Head of caudate nucleus (tissue), 42 donors: ENCODE measurements at regions of chr11 and their contacts with region 1.

Region 1: DNA sequence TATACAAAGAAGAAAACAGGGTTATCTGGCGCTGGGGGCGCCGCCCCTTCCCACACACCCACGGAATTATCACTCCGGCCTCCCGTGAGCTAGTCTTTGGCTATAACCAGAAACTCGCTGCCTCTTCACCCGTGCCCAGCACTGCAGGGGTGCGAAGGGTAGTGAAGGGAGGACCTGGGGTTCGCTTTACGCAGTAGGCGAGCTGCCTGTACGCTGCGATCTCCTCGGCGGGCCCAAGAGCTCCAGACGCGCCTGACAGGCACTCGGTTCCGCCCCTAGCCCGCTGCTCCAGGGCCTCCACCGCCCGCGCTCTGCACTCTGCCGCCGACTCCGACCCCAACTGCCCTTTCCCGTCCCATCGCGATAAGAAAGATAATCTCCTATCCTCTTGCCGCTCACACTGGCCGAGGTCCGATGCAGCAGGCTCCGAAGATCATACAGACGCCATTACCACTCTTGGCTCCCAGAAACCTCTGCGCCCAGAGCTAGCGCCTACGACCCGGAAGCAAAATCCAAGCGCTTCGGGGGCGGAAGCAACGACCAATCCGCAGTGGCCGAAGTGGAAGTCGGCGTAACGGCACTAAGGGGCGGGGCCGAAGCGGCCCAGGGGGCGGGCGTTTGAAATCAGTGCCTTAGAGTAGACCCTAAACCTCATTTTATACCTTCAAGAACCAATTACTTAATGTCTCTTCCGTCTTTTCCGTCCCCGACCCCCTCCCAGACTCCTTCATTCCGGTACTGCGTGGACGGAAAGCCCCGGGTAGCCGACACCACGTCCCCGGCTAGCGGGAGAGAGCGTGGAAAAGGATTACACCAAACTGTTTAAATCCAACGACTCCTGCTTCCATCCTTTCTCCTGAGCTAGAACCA is at the starts of genes CWC15 and KDM4D:
- DNase-seq: peak; percentile 91 to 99 (median 96)

Region 2: DNA sequence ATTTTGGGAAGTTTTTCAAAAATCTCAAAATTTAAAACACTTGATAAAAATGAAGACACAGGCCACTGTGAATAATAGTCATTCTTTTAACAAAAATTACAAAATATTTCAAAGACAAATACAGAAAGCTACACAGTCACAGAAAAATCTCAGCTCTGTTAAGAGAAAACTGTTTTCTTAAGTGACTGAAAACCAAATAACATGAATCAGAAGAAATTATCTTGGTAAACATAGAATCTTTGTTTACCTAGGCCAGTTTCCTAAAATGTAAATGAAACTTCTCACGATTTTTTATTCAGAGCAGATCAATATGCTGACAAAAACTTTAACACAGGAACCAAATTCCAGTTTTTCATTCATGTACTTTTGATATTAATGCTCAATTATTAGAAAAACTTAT is 31.0 kb after region 1 on chr11:
- intact Hi-C with region 1: no loop called
- DNase-seq: no peak

Region 3: GRCh38 chr11:95050595-95051202 is 77.4 kb after region 1 on chr11:
- intact Hi-C with region 1: no loop called
- DNase-seq: no peak

Region 4: GRCh38 chr11:95138448-95138847 is 165.1 kb after region 1 on chr11:
- intact Hi-C with region 1: loop called (anchors 5 kb)
- DNase-seq: no peak